SK-N-SH (cell line): ENCODE measurements at regions of chr2 and their contacts with region 1.

Region 1: DNA sequence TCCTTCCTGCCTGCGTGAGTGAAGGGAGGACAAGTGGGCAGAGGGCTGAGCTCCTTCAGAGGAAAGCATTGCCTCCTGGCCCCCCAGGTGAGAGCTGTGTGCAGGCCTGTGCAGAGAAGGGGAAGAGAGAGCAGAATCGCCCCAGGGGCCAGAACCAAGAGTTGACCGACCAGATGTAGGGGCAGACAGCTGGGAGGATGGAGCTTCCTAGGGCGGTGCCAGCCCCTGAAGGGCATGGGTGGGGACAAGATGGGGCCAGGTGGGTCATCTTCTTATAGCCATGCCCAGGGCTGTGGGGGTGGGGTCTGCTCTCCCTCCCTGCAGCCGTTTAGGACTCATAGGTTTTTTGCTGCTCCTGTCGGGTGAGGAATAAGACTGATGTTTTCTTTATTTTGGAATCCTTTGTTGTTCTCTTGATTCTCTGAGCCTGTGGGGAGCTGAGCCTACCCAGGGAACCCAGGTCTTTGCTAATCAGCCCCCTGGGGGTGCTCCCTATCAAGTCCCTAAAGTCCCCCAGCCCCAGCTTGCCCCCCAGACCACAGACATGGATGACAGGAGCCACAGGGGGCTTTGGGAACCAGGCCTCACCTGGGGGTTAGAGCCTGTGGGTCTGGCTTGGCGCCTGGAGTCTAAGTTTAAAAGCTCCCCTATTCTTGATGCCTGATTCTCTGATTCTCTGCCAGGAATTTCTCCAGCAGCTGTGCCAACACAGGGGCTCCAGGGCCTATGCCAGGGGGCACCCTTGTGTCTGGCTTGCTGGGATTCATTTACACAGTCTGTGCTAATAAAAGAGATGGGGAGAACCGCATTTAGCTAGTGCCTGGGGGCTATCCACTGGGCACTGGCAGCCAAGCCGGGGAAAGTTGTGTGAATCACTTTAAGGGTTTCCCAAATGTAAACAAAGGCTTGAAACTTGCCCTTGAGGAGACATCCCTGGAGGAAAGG is 9.3 kb upstream of the EFHD1 start:
- DNase-seq: no peak
- H3K4me3 ChIP-seq: no peak overlapping the region
- H3K27ac ChIP-seq: no peak overlapping the region
- H3K4me1 ChIP-seq: no peaks in the 10 kb centered on the region; a peak in 1 of 4 replicates
- H3K27me3 ChIP-seq: peaks cover 13% of the 10 kb centered on the region
- CTCF ChIP-seq: no peak
- EP300 ChIP-seq: no peak
- RAD21 ChIP-seq: no peak

Region 2: DNA sequence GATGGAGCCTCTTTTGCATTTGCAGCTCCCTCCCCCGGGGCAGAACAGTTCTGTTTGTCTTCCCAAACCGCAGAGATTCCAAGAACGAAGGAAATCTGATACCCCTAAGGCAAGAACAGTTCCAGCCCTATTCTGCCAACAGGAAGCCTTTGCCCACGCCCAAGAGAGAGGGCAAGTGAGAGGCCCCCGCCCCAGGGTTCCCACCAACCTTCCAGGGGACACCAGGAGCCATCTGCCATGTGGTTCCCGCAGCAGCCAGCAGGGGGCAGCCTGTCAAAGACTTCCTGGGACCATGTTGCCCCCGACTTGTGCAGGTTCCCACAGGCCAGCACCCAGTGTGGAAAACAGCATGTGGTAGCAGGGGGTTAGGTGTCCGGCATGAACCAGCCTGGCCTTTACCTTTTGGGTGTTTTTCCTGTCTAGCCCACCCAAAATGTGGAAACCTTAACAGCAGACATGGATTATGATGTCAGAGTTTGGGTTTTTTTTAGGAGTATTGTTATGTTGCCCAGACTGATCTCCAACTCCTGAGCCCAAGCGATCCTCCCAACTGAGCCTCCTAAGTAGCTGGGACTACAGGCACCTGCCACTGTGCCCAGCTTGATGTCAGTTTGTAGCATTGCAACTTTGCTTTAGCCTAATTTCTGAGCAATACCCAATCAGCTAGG is 12.4 kb before region 1 on chr2:
- CTCF ChIA-PET with region 1: interaction called, 16 read pairs
- POLR2A ChIA-PET with region 1: no interaction called
- DNase-seq: peak; percentile 68
- H3K4me3 ChIP-seq: no peak overlapping the region
- H3K27ac ChIP-seq: no peak overlapping the region
- H3K4me1 ChIP-seq: no peaks in the 10 kb centered on the region
- H3K27me3 ChIP-seq: no peaks in the 10 kb centered on the region
- CTCF ChIP-seq: peak; percentile 79
- EP300 ChIP-seq: no peak
- RAD21 ChIP-seq: peak; percentile 40

Region 3: DNA sequence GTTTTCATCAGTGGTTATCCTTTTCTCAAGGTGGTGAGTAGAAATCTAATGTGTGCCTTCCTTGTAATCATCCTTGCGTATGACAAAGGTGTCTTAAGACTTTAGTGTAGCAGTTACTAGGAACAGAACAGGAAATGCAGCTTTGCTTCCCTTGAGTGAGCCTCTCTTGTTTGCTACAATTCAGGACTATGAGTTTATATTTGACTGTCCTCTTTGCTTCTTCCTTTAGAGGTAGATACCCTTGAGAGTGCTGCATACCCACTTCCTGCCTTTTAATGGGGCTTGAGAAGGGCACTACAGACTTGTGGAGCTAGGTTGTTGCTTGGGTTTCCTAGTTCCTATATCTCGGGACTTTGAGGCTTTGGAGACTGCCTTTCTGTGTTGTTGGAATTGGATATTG is 148.5 kb after region 1 on chr2:
- CTCF ChIA-PET with region 1: no interaction called
- POLR2A ChIA-PET with region 1: no interaction called
- DNase-seq: no peak
- H3K4me3 ChIP-seq: no peak overlapping the region
- H3K27ac ChIP-seq: no peak overlapping the region
- H3K4me1 ChIP-seq: no peaks in the 10 kb centered on the region
- H3K27me3 ChIP-seq: no peaks in the 10 kb centered on the region
- CTCF ChIP-seq: no peak
- EP300 ChIP-seq: no peak
- RAD21 ChIP-seq: no peak